Mucosa of descending colon (tissue), 3 donors: ENCODE measurements at regions of chr20 and their contacts with region 1.

Region 1: GRCh38 chr20:56540420-56540819 is 7.4 kb downstream of the FAM209B start:
- DNase-seq: no peak
- ATAC-seq: no peak
- H3K4me3 ChIP-seq: no peak overlapping the region
- H3K4me1 ChIP-seq: no peaks in the 10 kb centered on the region
- CTCF ChIP-seq: no peak

Region 2: GRCh38 chr20:56922521-56922920 is 382.1 kb after region 1 on chr20:
- intact Hi-C with region 1: no loop called
- DNase-seq: no peak
- ATAC-seq: no peak
- H3K4me3 ChIP-seq: no peak overlapping the region
- H3K4me1 ChIP-seq: no peaks in the 10 kb centered on the region
- CTCF ChIP-seq: no peak

Region 3: GRCh38 chr20:56974499-56975236 is 434.2 kb after region 1 on chr20:
- intact Hi-C with region 1: loop called in 1 of 2 experiments (anchors 10 kb)
- DNase-seq: peak in 2 of 3 donors; percentile 46 to 69
- ATAC-seq: peak; percentile 26
- H3K4me3 ChIP-seq: no peak overlapping the region
- H3K4me1 ChIP-seq: no peaks in the 10 kb centered on the region
- CTCF ChIP-seq: no peak